ENCODE measurements at regions of chr13 and their contacts with region 1.

Region 1: GRCh38 chr13:20359335-20359734 is 127.2 kb upstream of the GJB6 start:
- DNase-seq: peak; percentile 99
- ATAC-seq: peak; percentile 95
- H3K4me3 ChIP-seq: no peak overlapping the region
- H3K27ac ChIP-seq: peak overlapping the region; percentile 8; the same call in 1 of the 2 replicates
- H3K4me1 ChIP-seq: peaks cover 5% of the 10 kb centered on the region
- H3K27me3 ChIP-seq: peaks cover 4% of the 10 kb centered on the region
- CTCF ChIP-seq: no peak
- POLR2A ChIP-seq: no peak
- RAD21 ChIP-seq: no peak

Region 2: GRCh38 chr13:20420938-20421337 is 61.6 kb after region 1 on chr13:
- CTCF ChIA-PET with region 1: no interaction called
- POLR2A ChIA-PET with region 1: no interaction called
- dilution Hi-C with region 1: no loop called
- in situ Hi-C with region 1: no loop called
- intact Hi-C with region 1: loop called (anchors 1 kb)
- DNase-seq: no peak
- ATAC-seq: no peak
- H3K4me3 ChIP-seq: no peak overlapping the region
- H3K27ac ChIP-seq: no peak overlapping the region
- H3K4me1 ChIP-seq: no peaks in the 10 kb centered on the region
- H3K27me3 ChIP-seq: peaks cover 18% of the 10 kb centered on the region
- CTCF ChIP-seq: no peak
- POLR2A ChIP-seq: no peak
- RAD21 ChIP-seq: no peak

Region 3: GRCh38 chr13:20461481-20461859 is 102.1 kb after region 1 on chr13:
- CTCF ChIA-PET with region 1: no interaction called
- POLR2A ChIA-PET with region 1: no interaction called
- dilution Hi-C with region 1: no loop called
- in situ Hi-C with region 1: no loop called
- intact Hi-C with region 1: loop called (anchors 10 kb)
- DNase-seq: peak; percentile 49
- ATAC-seq: peak; percentile 63; the same call in 1 of the 2 replicates
- H3K4me3 ChIP-seq: no peak overlapping the region
- H3K27ac ChIP-seq: no peak overlapping the region
- H3K4me1 ChIP-seq: peaks cover 6% of the 10 kb centered on the region; the same call in 1 of the 2 replicates
- H3K27me3 ChIP-seq: no peaks in the 10 kb centered on the region
- CTCF ChIP-seq: no peak
- POLR2A ChIP-seq: no peak
- RAD21 ChIP-seq: no peak